Activated B cell treated with CpG ODN at 0.5 μM for 24 hours (primary cell): ENCODE measurements at regions of chr10 and their contacts with region 1.

Region 1: GRCh38 chr10:11242443-11243387 is 225.0 kb downstream of the CELF2 start:
- DNase-seq: peak; percentile 54
- ATAC-seq: peak; percentile 59
- H3K4me3 Mint-ChIP-seq: peak overlapping the region; percentile 88
- H3K27ac Mint-ChIP-seq: no peak overlapping the region
- H3K4me1 Mint-ChIP-seq: peaks cover 8% of the 10 kb centered on the region
- H3K27me3 Mint-ChIP-seq: no peaks in the 10 kb centered on the region
- CTCF ChIP-seq: no peak

Region 2: GRCh38 chr10:11017570-11018431 is 224.9 kb before region 1 on chr10 and contains the start of gene CELF2:
- CTCF ChIA-PET with region 1: no interaction called
- POLR2A ChIA-PET with region 1: no interaction called
- intact Hi-C with region 1: loop called (anchors 5 kb)
- DNase-seq: peak; percentile 53
- ATAC-seq: peak; percentile 78
- H3K4me3 Mint-ChIP-seq: peak within 1 kb of the TSS; percentile 79
- H3K27ac Mint-ChIP-seq: no peak within 1 kb of the TSS
- H3K4me1 Mint-ChIP-seq: peaks cover 12% of the 10 kb centered on the region
- H3K27me3 Mint-ChIP-seq: peaks cover 67% of the 10 kb centered on the region
- CTCF ChIP-seq: no peak
- total RNA-seq, gene CELF2: 78.9 and 89.2 TPM in 2 replicates

Region 3: GRCh38 chr10:11145495-11145855 is 97.2 kb before region 1 on chr10:
- CTCF ChIA-PET with region 1: interaction called, 10 read pairs
- POLR2A ChIA-PET with region 1: interaction called, 10 read pairs
- intact Hi-C with region 1: loop called (anchors 1 kb)
- DNase-seq: no peak
- ATAC-seq: peak; percentile 79
- H3K4me3 Mint-ChIP-seq: peak overlapping the region; percentile 80
- H3K27ac Mint-ChIP-seq: peak overlapping the region; percentile 97
- H3K4me1 Mint-ChIP-seq: peaks cover 92% of the 10 kb centered on the region
- H3K27me3 Mint-ChIP-seq: no peaks in the 10 kb centered on the region
- CTCF ChIP-seq: no peak

Region 4: GRCh38 chr10:11197266-11197712 is 45.4 kb before region 1 on chr10:
- CTCF ChIA-PET with region 1: interaction called, 7 read pairs
- POLR2A ChIA-PET with region 1: interaction called, 25 read pairs
- intact Hi-C with region 1: loop called (anchors 1 kb)
- DNase-seq: no peak
- ATAC-seq: peak; percentile 82
- H3K4me3 Mint-ChIP-seq: peak overlapping the region; percentile 81
- H3K27ac Mint-ChIP-seq: peak overlapping the region; percentile 94
- H3K4me1 Mint-ChIP-seq: peaks cover 97% of the 10 kb centered on the region
- H3K27me3 Mint-ChIP-seq: no peaks in the 10 kb centered on the region
- CTCF ChIP-seq: no peak

Region 5: GRCh38 chr10:11225935-11226334 is 16.8 kb before region 1 on chr10:
- CTCF ChIA-PET with region 1: interaction called, 28 read pairs
- POLR2A ChIA-PET with region 1: interaction called, 98 read pairs
- intact Hi-C with region 1: loop called (anchors 1 kb)
- DNase-seq: no peak
- ATAC-seq: peak; percentile 8
- H3K4me3 Mint-ChIP-seq: no peak overlapping the region
- H3K27ac Mint-ChIP-seq: peak overlapping the region; percentile 96
- H3K4me1 Mint-ChIP-seq: peaks cover 85% of the 10 kb centered on the region
- H3K27me3 Mint-ChIP-seq: no peaks in the 10 kb centered on the region
- CTCF ChIP-seq: no peak

Region 6: DNA sequence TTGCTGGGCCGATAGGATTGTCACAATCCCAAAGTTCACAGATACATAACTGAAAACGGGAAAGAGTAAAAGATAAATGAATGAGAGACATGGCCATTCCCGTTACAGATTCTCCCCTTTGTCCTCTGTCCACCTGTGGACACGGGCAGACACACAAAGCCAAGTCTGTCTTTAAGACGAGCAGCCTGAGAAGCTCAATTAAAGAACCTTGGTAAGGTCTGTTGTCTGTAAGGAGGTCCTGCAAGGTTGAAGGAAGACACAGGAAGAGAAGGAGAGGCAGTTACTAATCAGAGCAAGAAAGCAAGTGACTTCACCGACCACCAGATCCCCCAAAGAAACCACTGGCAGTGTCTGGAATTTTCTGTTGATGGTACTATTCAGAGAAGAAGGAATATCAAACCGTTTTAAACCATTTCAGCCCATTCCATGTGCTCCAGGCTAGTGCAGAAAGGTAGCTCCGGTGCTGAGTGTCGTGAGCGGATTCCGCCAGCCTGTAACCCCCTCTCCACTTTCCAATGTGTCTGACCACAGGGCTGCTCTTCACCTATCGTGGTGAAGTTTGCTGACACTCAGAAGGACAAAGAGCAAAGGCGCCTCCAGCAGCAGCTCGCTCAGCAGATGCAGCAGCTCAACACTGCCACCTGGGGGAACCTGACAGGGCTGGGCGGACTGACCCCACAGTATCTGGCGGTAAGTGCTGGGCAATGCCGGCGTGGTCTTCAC is 27.6 kb after region 1 on chr10:
- CTCF ChIA-PET with region 1: interaction called, 22 read pairs
- POLR2A ChIA-PET with region 1: interaction called, 7 read pairs
- intact Hi-C with region 1: loop called (anchors 1 kb)
- DNase-seq: peak; percentile 57
- ATAC-seq: peak; percentile 89
- H3K4me3 Mint-ChIP-seq: peak overlapping the region; percentile 28
- H3K27ac Mint-ChIP-seq: peak overlapping the region; percentile 77
- H3K4me1 Mint-ChIP-seq: peaks cover 64% of the 10 kb centered on the region
- H3K27me3 Mint-ChIP-seq: no peaks in the 10 kb centered on the region
- CTCF ChIP-seq: no peak

Region 7: DNA sequence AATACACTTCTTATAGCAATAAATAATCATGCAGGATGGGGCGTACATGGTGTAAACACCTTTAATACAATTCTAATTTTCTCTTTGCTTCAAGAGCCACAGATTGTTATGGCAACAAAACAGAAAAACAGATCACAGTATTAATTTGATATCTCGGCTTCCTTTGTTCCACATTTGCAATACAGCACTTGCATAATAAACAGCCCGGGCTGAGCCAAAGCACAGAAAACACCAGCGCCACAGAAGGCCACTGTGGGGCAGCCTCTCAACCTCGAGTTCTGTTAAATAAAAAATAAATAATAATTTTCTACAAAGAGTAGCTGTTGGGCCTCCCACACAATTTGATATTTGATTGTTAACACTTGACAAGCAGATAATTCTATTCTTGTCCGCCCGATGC is 112.9 kb after region 1 on chr10:
- CTCF ChIA-PET with region 1: no interaction called
- POLR2A ChIA-PET with region 1: no interaction called
- intact Hi-C with region 1: no loop called
- DNase-seq: no peak
- ATAC-seq: no peak
- H3K4me3 Mint-ChIP-seq: no peak overlapping the region
- H3K27ac Mint-ChIP-seq: no peak overlapping the region
- H3K4me1 Mint-ChIP-seq: no peaks in the 10 kb centered on the region
- H3K27me3 Mint-ChIP-seq: peaks cover 8% of the 10 kb centered on the region
- CTCF ChIP-seq: no peak

Region 8: DNA sequence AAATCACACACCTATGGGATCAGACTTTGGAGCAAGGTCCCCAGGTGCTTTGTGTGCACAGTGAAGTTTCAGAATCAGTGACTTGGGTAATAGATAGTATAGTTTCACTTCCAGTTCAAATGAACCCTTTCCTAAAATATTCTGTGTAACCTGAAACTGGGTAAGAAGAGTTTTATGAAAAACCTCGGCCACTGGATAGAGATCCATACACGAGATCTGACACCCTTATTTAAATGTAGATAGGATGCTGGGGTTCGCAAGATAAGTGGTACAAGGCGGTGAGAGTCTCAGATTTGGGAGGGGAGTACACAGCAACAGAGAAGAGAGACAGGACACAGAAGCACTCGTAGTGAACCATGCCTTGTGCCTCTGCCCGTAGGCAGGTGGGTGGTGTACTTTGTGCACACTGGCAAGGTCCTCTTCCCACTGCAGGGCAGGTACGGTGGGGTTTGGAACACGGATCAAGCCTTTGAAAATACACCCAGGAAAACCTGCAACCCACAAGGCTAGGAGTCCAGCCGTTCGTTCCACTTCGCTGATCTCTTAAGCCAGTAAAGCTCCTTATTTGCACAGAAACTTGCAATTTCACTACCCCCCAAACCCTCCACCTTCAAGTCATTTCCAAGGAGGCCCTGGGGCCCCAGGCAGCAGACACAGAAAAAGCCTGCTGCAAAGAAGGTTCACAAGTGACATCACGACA is 206.0 kb after region 1 on chr10:
- CTCF ChIA-PET with region 1: no interaction called
- POLR2A ChIA-PET with region 1: no interaction called
- intact Hi-C with region 1: no loop called
- DNase-seq: no peak
- ATAC-seq: peak; percentile 73
- H3K4me3 Mint-ChIP-seq: peak overlapping the region; percentile 81
- H3K27ac Mint-ChIP-seq: peak overlapping the region; percentile 81
- H3K4me1 Mint-ChIP-seq: peaks cover 41% of the 10 kb centered on the region
- H3K27me3 Mint-ChIP-seq: no peaks in the 10 kb centered on the region
- CTCF ChIP-seq: no peak